Activated CD4-positive, alpha-beta memory T cell treated with anti-CD3 and anti-CD28 coated beads for 36 hours (primary cell): ENCODE measurements at regions of chr15 and their contacts with region 1.

Region 1: GRCh38 chr15:60916679-60917460 is 312.2 kb downstream of the RORA start:
- DNase-seq: peak; percentile 93
- H3K4me3 Mint-ChIP-seq: no peak overlapping the region
- H3K27ac Mint-ChIP-seq: peak overlapping the region; percentile 5
- H3K4me1 Mint-ChIP-seq: peaks cover 25% of the 10 kb centered on the region
- H3K27me3 Mint-ChIP-seq: peaks cover 3% of the 10 kb centered on the region

Region 2: DNA sequence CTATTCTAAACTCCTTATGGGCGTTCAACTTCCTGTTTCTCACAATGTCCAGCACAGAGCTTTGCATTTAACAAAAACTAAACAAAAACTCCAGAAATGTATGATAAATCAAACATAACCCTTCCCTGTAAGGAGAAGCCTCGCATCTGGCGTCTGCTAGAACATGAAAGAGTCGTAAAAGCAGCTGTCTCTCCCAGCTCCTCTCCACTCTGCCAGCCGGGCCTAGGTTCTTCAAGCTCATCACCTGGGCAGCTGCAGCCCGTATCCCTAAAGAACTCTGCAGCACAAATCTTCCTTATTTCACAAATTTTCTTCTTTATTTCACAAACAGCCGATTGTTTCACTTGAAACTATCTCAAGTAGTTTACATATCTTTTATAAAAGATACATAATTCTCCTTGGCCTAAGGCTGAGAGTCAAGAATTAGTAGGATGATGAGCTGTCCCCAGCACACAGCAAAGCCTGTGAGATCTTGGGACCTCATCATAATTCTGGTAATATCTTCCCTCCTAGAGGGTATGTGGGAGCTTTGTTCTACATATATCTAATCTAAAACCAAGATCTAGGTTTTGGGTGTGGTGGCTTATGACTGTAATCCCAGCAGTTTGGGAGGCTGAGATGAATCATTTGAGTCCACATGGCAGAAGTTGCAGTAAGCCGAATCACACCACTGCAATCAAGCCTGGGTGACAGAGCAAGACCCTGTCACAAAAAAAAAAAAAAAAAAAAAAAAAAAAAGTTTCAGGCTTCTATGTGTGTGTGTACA is 554.4 kb before region 1 on chr15:
- CTCF ChIA-PET with region 1: interaction called, 14 read pairs
- POLR2A ChIA-PET with region 1: no interaction called
- intact Hi-C with region 1: no loop called
- DNase-seq: peak; percentile 72
- H3K4me3 Mint-ChIP-seq: no peak overlapping the region
- H3K27ac Mint-ChIP-seq: peak overlapping the region; percentile 63
- H3K4me1 Mint-ChIP-seq: peaks cover 25% of the 10 kb centered on the region
- H3K27me3 Mint-ChIP-seq: peaks cover 2% of the 10 kb centered on the region

Region 3: GRCh38 chr15:60592371-60593169 is 324.3 kb before region 1 on chr15:
- CTCF ChIA-PET with region 1: interaction called, 147 read pairs
- POLR2A ChIA-PET with region 1: interaction called, 5 read pairs
- intact Hi-C with region 1: no loop called
- DNase-seq: peak; percentile 91
- H3K4me3 Mint-ChIP-seq: peak overlapping the region; percentile 81
- H3K27ac Mint-ChIP-seq: peak overlapping the region; percentile 82
- H3K4me1 Mint-ChIP-seq: peaks cover 45% of the 10 kb centered on the region
- H3K27me3 Mint-ChIP-seq: no peaks in the 10 kb centered on the region

Region 4: DNA sequence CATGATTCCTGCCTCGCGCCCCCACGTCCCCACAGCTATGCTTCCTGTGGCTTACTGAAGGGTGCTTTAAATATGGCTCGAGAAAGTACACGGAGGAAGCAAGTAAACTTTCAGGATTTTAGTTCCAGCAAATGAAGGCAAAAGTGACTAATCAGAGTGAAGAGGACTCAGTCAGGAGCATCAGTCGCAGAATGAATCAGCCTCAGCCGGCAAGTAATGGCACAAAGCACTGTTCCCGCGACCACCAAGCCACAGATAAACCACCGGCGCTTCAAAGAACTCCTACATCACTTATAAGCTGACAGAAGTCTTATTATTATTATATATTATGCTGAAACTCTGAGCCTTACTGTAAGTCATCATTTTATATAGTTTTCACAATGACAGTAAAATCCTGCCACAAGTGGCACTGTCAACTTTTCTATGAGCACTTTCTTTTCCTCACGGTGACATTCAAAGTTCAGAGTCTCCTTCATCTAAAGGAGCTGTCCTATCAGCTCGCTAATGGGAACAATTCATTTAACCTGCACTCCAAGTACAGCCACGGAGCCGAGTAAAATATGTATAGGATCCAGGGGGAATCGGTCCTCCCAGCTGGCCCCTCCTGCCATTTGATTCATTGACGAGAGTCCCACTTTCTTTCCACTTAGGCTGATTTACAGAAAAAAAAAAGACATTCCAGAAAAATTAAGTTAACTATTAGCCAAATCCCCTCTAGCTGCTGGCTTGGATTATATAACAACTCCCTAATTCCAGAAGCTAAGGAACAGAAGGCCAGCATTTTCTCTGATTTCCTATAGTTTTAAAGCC is 221.0 kb before region 1 on chr15:
- CTCF ChIA-PET with region 1: interaction called, 10 read pairs
- POLR2A ChIA-PET with region 1: no interaction called
- intact Hi-C with region 1: loop called (anchors 5 kb)
- DNase-seq: peak; percentile 95
- H3K4me3 Mint-ChIP-seq: peak overlapping the region; percentile 57
- H3K27ac Mint-ChIP-seq: peak overlapping the region; percentile 80
- H3K4me1 Mint-ChIP-seq: peaks cover 84% of the 10 kb centered on the region
- H3K27me3 Mint-ChIP-seq: no peaks in the 10 kb centered on the region

Region 5: DNA sequence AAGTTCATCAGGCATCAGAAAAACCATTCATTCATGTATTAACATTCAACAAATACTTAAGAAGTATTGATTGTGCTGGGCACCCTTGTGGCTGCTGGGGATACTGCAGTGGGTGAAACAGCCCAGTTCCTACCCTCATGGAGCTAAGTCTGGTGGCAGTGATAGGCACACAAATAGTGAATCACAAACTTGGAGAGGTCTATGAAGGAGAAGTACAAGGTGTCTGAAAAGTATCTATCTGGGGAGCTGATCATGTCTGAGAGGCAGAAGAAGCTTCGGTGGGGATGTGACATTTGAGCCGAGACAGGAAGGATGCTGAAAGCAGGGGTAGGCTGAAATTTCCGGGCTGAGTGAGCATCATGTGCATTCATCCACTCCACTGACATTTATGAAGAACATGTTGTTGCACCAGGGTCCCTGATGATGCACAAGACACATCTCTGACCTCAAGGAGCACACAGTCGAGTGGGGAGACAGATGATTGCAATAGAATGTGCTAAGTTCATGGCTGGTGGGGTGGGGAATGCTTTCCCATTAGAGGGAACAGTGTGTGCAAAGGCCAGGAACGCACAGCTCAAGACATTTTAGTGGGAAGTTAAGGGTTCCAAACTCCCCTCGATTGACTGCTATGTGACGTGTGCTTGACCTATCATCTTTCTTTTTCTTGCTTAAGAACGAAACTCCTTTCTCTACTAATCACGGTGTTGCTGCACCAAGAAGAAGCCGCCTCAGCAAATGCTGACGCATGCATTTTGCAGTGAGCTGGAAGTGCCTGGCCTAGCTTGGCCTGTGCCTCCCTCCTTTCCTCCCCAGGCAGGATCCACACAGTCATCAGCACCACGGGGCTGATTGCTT is 128.8 kb before region 1 on chr15:
- CTCF ChIA-PET with region 1: interaction called, 15 read pairs
- POLR2A ChIA-PET with region 1: no interaction called
- intact Hi-C with region 1: no loop called
- DNase-seq: peak; percentile 77
- H3K4me3 Mint-ChIP-seq: peak overlapping the region; percentile 13
- H3K27ac Mint-ChIP-seq: peak overlapping the region; percentile 79
- H3K4me1 Mint-ChIP-seq: peaks cover 72% of the 10 kb centered on the region
- H3K27me3 Mint-ChIP-seq: no peaks in the 10 kb centered on the region

Region 6: GRCh38 chr15:60899322-60899966 is 17.4 kb before region 1 on chr15:
- CTCF ChIA-PET with region 1: interaction called, 24 read pairs
- POLR2A ChIA-PET with region 1: interaction called, 6 read pairs
- intact Hi-C with region 1: loop called (anchors 1 kb)
- DNase-seq: peak; percentile 48
- H3K4me3 Mint-ChIP-seq: no peak overlapping the region
- H3K27ac Mint-ChIP-seq: peak overlapping the region; percentile 57
- H3K4me1 Mint-ChIP-seq: peaks cover 64% of the 10 kb centered on the region
- H3K27me3 Mint-ChIP-seq: peaks cover 4% of the 10 kb centered on the region

Region 7: GRCh38 chr15:61038387-61038786 is 121.5 kb after region 1 on chr15:
- CTCF ChIA-PET with region 1: no interaction called
- POLR2A ChIA-PET with region 1: no interaction called
- intact Hi-C with region 1: no loop called
- DNase-seq: no peak
- H3K4me3 Mint-ChIP-seq: no peak overlapping the region
- H3K27ac Mint-ChIP-seq: no peak overlapping the region
- H3K4me1 Mint-ChIP-seq: no peaks in the 10 kb centered on the region
- H3K27me3 Mint-ChIP-seq: peaks cover 17% of the 10 kb centered on the region

Region 8: GRCh38 chr15:61216519-61216918 is 299.6 kb after region 1 on chr15:
- CTCF ChIA-PET with region 1: no interaction called
- POLR2A ChIA-PET with region 1: no interaction called
- intact Hi-C with region 1: no loop called
- DNase-seq: no peak
- H3K4me3 Mint-ChIP-seq: no peak overlapping the region
- H3K27ac Mint-ChIP-seq: no peak overlapping the region
- H3K4me1 Mint-ChIP-seq: no peaks in the 10 kb centered on the region
- H3K27me3 Mint-ChIP-seq: peaks cover 23% of the 10 kb centered on the region